ENCODE measurements at regions of chr6 and their contacts with region 1.

Region 1: GRCh38 chr6:131914967-131915751 is 36.0 kb downstream of the CCN2 start:
- H3K4me3 ChIP-seq: no peak overlapping the region
- H3K27ac ChIP-seq: no peak overlapping the region
- H3K4me1 ChIP-seq: no peaks in the 10 kb centered on the region
- CTCF ChIP-seq: peak; percentile 72

Region 2: DNA sequence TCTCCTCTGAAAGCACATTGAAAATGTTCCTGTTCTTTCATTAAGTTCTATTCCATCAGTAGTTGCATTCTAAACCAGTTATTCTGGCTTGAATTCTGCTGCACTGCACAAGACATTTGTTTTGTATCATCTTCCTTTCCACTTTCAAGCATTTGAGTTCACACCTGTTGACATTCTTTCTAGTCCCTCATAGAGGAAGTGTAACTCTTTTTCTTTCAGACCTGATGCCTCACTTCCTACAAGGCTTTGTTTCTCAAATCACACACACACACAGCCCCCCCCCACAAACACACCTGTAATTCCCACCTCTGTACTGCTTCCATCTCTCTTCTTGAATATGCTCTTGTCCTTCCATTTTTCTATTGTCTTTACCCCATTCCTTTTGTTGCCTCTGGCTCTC is 14.9 kb before region 1 on chr6:
- CTCF ChIA-PET with region 1: interaction called, 12 read pairs
- POLR2A ChIA-PET with region 1: no interaction called
- H3K4me3 ChIP-seq: no peak overlapping the region
- H3K27ac ChIP-seq: no peak overlapping the region
- H3K4me1 ChIP-seq: no peaks in the 10 kb centered on the region
- CTCF ChIP-seq: no peak

Region 3: GRCh38 chr6:131949909-131950766 is 35.0 kb after region 1 on chr6:
- CTCF ChIA-PET with region 1: interaction called, 11 read pairs
- POLR2A ChIA-PET with region 1: no interaction called
- H3K4me3 ChIP-seq: peak overlapping the region; percentile 73
- H3K27ac ChIP-seq: peak overlapping the region; percentile 74; the same call in 1 of the 2 replicates
- H3K4me1 ChIP-seq: peaks cover 23% of the 10 kb centered on the region
- CTCF ChIP-seq: peak; percentile 95

Region 4: GRCh38 chr6:132227904-132228303 is 312.7 kb after region 1 on chr6:
- CTCF ChIA-PET with region 1: interaction called, 12 read pairs
- POLR2A ChIA-PET with region 1: no interaction called
- H3K4me3 ChIP-seq: no peak overlapping the region
- H3K27ac ChIP-seq: no peak overlapping the region
- H3K4me1 ChIP-seq: no peaks in the 10 kb centered on the region
- CTCF ChIP-seq: no peak

Region 5: DNA sequence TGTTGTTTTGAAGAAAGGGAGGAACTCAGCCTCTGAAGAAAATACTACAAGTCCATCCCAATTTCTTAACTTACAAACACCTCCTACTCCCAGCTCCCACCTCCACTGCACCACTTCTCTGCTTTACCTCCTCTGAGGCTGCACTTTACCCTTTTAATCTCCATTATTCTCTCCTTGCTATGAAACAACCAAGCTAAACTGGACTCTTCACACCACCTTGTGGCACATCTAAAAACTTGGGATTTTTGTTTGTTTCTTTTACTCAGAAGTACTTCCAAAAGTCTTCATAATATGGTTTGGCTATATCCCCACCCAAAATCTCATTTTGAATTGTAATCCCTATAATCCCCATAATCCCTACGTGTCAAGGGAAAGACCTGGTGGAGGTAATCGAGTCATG is 343.9 kb after region 1 on chr6:
- CTCF ChIA-PET with region 1: interaction called, 17 read pairs
- POLR2A ChIA-PET with region 1: no interaction called
- H3K4me3 ChIP-seq: no peak overlapping the region
- H3K27ac ChIP-seq: no peak overlapping the region
- H3K4me1 ChIP-seq: no peaks in the 10 kb centered on the region
- CTCF ChIP-seq: peak; percentile 33; the same call in 1 of the 2 replicates

Region 6: DNA sequence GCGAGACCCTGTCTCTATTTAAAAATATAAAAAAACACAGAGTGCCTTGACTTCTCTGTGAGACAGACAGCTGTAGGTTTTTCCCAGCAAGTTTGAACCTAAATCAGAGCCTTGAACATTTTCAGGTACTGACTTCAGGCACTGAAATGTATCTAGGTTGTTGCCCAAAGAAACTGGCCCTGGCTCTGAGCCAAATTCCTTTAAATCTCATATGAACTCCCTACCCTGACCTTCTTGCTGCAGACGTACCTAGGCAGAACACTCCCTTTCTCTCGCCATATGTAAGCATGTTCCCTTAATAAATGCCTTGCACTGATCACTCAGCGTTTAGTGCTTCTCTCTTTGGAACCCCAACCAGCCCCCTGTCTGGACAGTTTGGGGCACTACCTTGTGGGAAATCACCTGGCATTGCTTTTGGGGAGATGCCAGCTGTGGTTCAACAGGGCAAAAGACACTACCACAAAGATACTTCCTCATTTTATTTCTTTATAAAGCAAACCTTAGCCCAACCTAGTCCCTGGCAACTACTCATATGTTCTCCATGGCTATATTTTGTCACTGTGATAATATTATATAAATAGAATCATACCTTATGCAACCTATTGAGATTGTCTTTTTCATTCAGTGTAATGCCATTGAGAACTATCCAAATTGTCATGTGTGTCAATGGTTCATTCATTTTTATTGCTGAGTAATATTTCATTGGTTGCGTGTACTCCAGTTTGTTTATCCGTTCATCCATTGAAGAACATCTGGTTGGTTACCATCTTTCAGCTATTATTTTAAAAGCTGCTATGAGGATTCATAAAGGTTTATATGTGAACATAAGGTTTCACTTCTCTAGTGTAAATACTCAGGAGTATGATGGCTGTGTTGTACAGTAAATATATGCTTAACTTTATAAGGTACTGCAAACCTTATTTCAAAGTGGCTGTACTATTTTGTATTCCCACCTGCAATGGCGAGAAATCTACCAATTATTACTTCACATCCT is 371.2 kb after region 1 on chr6:
- CTCF ChIA-PET with region 1: interaction called, 10 read pairs
- POLR2A ChIA-PET with region 1: no interaction called
- H3K4me3 ChIP-seq: no peak overlapping the region
- H3K27ac ChIP-seq: no peak overlapping the region
- H3K4me1 ChIP-seq: no peaks in the 10 kb centered on the region
- CTCF ChIP-seq: no peak